H1 (cell line): ENCODE measurements at regions of chr5 and their contacts with region 1.

Region 1: GRCh38 chr5:111158105-111158744 is 66.0 kb upstream of the CAMK4 start:
- DNase-seq: peak; percentile 43 to 90
- H3K4me3 ChIP-seq: no peak overlapping the region
- H3K27ac ChIP-seq: no peak overlapping the region
- H3K4me1 ChIP-seq: no peaks in the 10 kb centered on the region
- H3K27me3 ChIP-seq: no peaks in the 10 kb centered on the region
- CTCF ChIP-seq: peak; percentile 53 to 98 (median 90)
- EP300 ChIP-seq: no peak
- POLR2A ChIP-seq: no peak
- RAD21 ChIP-seq: peak; percentile 96 to 99

Region 2: GRCh38 chr5:111004286-111004685 is 153.9 kb before region 1 on chr5:
- CTCF ChIA-PET with region 1: no interaction called
- POLR2A ChIA-PET with region 1: no interaction called
- DNase-seq: no peak
- H3K4me3 ChIP-seq: no peak overlapping the region
- H3K27ac ChIP-seq: no peak overlapping the region; the same call in 1 of the 2 replicates
- H3K4me1 ChIP-seq: no peaks in the 10 kb centered on the region
- H3K27me3 ChIP-seq: no peaks in the 10 kb centered on the region
- CTCF ChIP-seq: no peak
- EP300 ChIP-seq: no peak
- POLR2A ChIP-seq: no peak
- RAD21 ChIP-seq: no peak

Region 3: DNA sequence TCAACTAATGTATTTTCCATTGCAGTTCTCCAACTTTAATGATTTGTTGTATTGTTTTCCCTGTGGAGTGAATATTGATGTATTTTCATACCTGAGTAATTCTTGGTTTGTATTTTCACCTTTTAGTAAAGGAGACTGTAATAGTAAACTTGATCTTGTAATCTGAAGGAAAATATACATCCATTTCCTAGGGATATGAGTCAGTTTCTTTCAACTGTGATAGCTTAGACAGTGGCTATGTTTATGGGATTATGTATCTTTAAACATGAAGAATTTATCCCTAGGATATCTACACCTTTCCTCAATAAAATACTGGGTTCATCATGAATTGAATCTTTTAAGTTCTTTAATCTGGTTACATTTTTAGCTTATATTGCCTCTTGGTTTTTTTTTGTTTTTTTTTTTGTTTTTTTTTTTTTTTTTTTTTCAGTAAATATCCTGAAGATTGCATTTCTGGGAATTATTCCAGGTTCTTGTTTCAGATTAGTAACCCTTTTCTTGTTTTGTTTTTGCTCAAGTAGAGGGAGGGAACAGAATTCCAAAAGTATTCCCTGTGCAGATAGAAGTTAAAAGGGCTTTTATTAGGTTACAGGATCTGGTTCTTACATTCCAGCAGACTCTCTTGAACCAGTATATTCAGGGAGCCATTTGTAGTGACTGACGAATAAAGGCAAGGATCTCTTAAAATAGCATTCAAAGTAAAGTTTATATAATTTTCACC is 59.0 kb before region 1 on chr5:
- CTCF ChIA-PET with region 1: no interaction called
- POLR2A ChIA-PET with region 1: no interaction called
- DNase-seq: no peak
- H3K4me3 ChIP-seq: no peak overlapping the region
- H3K27ac ChIP-seq: no peak overlapping the region
- H3K4me1 ChIP-seq: no peaks in the 10 kb centered on the region
- H3K27me3 ChIP-seq: no peaks in the 10 kb centered on the region
- CTCF ChIP-seq: no peak
- EP300 ChIP-seq: no peak
- POLR2A ChIP-seq: no peak
- RAD21 ChIP-seq: no peak

Region 4: DNA sequence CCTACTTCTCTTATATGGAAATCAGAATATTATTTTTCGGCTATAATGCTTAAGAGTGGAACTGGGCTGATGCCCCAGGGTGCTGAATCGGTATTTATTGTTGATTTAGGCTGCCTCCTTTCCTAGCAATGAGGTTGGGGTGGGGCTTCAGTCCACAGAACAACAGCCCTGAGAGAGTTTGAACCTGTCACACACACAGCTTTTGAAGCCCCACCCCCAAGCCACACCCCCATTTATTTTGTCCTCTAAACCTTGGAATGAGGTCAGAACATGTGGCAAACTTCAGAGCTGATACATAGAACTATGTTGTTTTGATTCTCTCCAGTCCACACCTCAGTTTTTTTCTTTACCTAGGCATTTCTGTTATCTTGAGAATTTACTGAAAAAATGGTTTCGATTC is 14.3 kb after region 1 on chr5:
- CTCF ChIA-PET with region 1: interaction called, 73 read pairs
- POLR2A ChIA-PET with region 1: no interaction called
- DNase-seq: no peak
- H3K4me3 ChIP-seq: no peak overlapping the region
- H3K27ac ChIP-seq: no peak overlapping the region
- H3K4me1 ChIP-seq: no peaks in the 10 kb centered on the region; a peak in 1 of 7 replicates
- H3K27me3 ChIP-seq: peaks cover 0 to 1% (median 0%) of the 10 kb centered on the region in 4 experiments; a peak in 1 of 7 replicates
- CTCF ChIP-seq: no peak
- EP300 ChIP-seq: no peak
- POLR2A ChIP-seq: no peak
- RAD21 ChIP-seq: no peak

Region 5: DNA sequence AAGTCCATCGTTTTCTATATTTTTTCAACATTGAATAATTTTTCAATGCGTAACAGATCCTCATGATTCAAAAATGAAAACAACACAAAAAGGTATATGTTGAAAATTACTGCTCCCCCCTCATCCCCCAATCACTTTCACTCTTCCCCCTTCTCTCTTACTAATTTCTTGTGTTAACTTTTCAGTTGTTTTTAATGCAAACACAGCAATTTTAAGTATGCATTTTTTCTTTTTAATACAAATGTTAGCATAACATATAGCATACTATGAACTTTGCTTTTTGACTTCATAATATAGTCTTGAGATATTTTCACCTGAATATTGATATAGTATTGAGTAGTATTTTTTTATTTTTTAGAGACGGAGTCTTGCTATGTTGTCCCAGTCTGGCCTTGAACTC is 24.8 kb after region 1 on chr5:
- CTCF ChIA-PET with region 1: no interaction called
- POLR2A ChIA-PET with region 1: no interaction called
- DNase-seq: no peak
- H3K4me3 ChIP-seq: no peak overlapping the region
- H3K27ac ChIP-seq: no peak overlapping the region
- H3K4me1 ChIP-seq: no peaks in the 10 kb centered on the region
- H3K27me3 ChIP-seq: no peaks in the 10 kb centered on the region
- CTCF ChIP-seq: no peak
- EP300 ChIP-seq: no peak
- POLR2A ChIP-seq: no peak
- RAD21 ChIP-seq: no peak